ENCODE measurements at regions of chr2 and their contacts with region 1.

Region 1: GRCh38 chr2:181058378-181059269 is 78.2 kb downstream of the UBE2E3 start:
- DNase-seq: peak in 11 of 14 experiments; percentile 3 to 74 (median 26)
- ATAC-seq: no peak
- H3K4me3 ChIP-seq: no peak overlapping the region
- H3K4me3 Mint-ChIP-seq: no peak overlapping the region
- H3K27ac ChIP-seq: no peak overlapping the region
- H3K27ac Mint-ChIP-seq: no peak overlapping the region
- H3K4me1 ChIP-seq: no peaks in the 10 kb centered on the region
- H3K4me1 Mint-ChIP-seq: peaks cover 9% of the 10 kb centered on the region
- H3K27me3 ChIP-seq: no peaks in the 10 kb centered on the region
- H3K27me3 Mint-ChIP-seq: no peaks in the 10 kb centered on the region
- CTCF ChIP-seq: peak; percentile 92

Region 2: DNA sequence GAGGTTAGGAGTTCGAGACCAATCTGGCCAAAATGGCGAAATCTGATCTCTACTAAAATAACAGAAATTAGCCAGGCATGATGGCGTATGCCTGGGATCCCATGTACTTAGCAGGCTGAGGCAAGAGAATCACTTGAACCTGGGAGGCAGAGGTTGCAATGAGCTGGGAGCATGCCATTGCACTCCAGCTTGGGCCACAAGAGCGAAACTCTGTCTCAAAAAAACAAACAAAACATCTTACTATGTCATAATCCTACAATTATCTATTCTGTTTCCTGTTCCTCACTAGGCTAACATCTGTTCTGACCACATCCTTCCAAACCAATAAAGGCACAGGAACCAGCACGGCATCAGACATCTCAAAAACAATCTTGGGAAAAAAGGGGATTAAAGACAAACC is 440.1 kb before region 1 on chr2:
- CTCF ChIA-PET with region 1: no interaction called
- POLR2A ChIA-PET with region 1: no interaction called
- intact Hi-C with region 1: loop called in 1 of 2 experiments (anchors 10 kb)
- DNase-seq: no peak
- ATAC-seq: no peak
- H3K4me3 ChIP-seq: no peak overlapping the region
- H3K4me3 Mint-ChIP-seq: no peak overlapping the region
- H3K27ac ChIP-seq: no peak overlapping the region
- H3K27ac Mint-ChIP-seq: no peak overlapping the region
- H3K4me1 ChIP-seq: no peaks in the 10 kb centered on the region
- H3K4me1 Mint-ChIP-seq: no peaks in the 10 kb centered on the region
- H3K27me3 ChIP-seq: no peaks in the 10 kb centered on the region
- H3K27me3 Mint-ChIP-seq: peaks cover 15% of the 10 kb centered on the region
- CTCF ChIP-seq: no peak